ENCODE measurements at regions of chr3 and their contacts with region 1.

Region 1: GRCh38 chr3:11060500-11061251 is 68.1 kb downstream of the SLC6A1 start:
- DNase-seq: peak; percentile 51 to 60
- ATAC-seq: peak; percentile 64 to 85 (median 78)
- H3K4me3 ChIP-seq: peak overlapping the region in 8 of 10 donors; percentile 6 to 47 (median 28)
- H3K27ac ChIP-seq: no peak overlapping the region
- H3K4me1 ChIP-seq: peaks cover 0 to 15% (median 7%) of the 10 kb centered on the region in 9 donors
- H3K27me3 ChIP-seq: peaks cover 0 to 45% (median 21%) of the 10 kb centered on the region in 7 donors
- CTCF ChIP-seq: peak; percentile 70 to 93 (median 89)

Region 2: GRCh38 chr3:10758304-10759061 is 302.2 kb before region 1 on chr3:
- intact Hi-C with region 1: loop called (anchors 2 to 5 kb)
- DNase-seq: peak; percentile 22 to 42
- ATAC-seq: peak; percentile 75 to 89 (median 84)
- H3K4me3 ChIP-seq: no peak overlapping the region
- H3K27ac ChIP-seq: no peak overlapping the region
- H3K4me1 ChIP-seq: no peaks in the 10 kb centered on the region
- H3K27me3 ChIP-seq: peaks cover 0 to 76% (median 52%) of the 10 kb centered on the region in 7 donors
- CTCF ChIP-seq: peak; percentile 41 to 76 (median 72)

Region 3: GRCh38 chr3:10764259-10765051 is 296.2 kb before region 1 on chr3:
- intact Hi-C with region 1: loop called (anchors 2 to 5 kb)
- DNase-seq: no peak
- ATAC-seq: peak in 2 of 8 donors; percentile 24 to 46
- H3K4me3 ChIP-seq: no peak overlapping the region
- H3K27ac ChIP-seq: no peak overlapping the region
- H3K4me1 ChIP-seq: no peaks in the 10 kb centered on the region
- H3K27me3 ChIP-seq: peaks cover 3 to 78% (median 53%) of the 10 kb centered on the region in 7 donors
- CTCF ChIP-seq: no peak

Region 4: DNA sequence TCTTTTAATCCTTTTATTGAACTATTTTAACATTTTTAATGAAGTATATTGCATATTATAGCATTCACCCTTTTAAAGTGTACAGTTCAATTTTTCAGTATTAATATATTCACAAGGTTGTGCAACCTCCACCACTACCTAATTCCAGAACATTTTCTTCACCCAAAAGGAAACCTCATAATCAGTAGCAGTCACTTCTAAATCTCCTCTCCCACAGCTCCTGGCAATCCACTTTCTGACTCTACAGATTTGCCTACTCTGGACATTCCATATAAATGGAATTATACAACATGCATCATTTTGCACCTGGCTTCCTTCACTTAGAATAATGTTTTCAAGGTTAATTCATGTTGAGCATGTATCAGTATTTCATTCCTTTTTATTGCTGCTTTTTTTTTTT is 38.6 kb after region 1 on chr3:
- intact Hi-C with region 1: no loop called
- DNase-seq: no peak
- ATAC-seq: no peak
- H3K4me3 ChIP-seq: no peak overlapping the region
- H3K27ac ChIP-seq: no peak overlapping the region
- H3K4me1 ChIP-seq: peaks cover 0 to 22% (median 11%) of the 10 kb centered on the region in 9 donors
- H3K27me3 ChIP-seq: peaks cover 0 to 22% (median 3%) of the 10 kb centered on the region in 7 donors
- CTCF ChIP-seq: no peak

Region 5: GRCh38 chr3:11201246-11202024 is 140.8 kb after region 1 on chr3:
- intact Hi-C with region 1: loop called in 8 of 10 experiments (anchors 1 to 10 kb)
- DNase-seq: peak in 1 of 2 donors; percentile 14
- ATAC-seq: peak; percentile 50 to 75 (median 69)
- H3K4me3 ChIP-seq: no peak overlapping the region
- H3K27ac ChIP-seq: peak overlapping the region in 5 of 10 donors; percentile 2 to 74 (median 56)
- H3K4me1 ChIP-seq: peaks cover 0 to 41% (median 12%) of the 10 kb centered on the region in 9 donors
- H3K27me3 ChIP-seq: peaks cover 0 to 6% (median 0%) of the 10 kb centered on the region in 7 donors
- CTCF ChIP-seq: no peak

Region 6: GRCh38 chr3:11323813-11324212 is 263.1 kb after region 1 on chr3:
- intact Hi-C with region 1: loop called in 1 of 10 experiments (anchors 10 kb)
- DNase-seq: no peak
- ATAC-seq: no peak
- H3K4me3 ChIP-seq: no peak overlapping the region
- H3K27ac ChIP-seq: peak overlapping the region in 1 of 10 donors; percentile 22
- H3K4me1 ChIP-seq: no peaks in the 10 kb centered on the region
- H3K27me3 ChIP-seq: no peaks in the 10 kb centered on the region
- CTCF ChIP-seq: no peak

Region 7: GRCh38 chr3:11610044-11610671 is 549.5 kb after region 1 on chr3:
- intact Hi-C with region 1: no loop called
- DNase-seq: peak in 1 of 2 donors; percentile 37
- ATAC-seq: peak in 7 of 8 donors; percentile 36 to 60 (median 57)
- H3K4me3 ChIP-seq: peak overlapping the region in 3 of 10 donors; percentile 5 to 12 (median 6)
- H3K27ac ChIP-seq: peak overlapping the region in 6 of 10 donors; percentile 0 to 70 (median 31)
- H3K4me1 ChIP-seq: peaks cover 18 to 96% (median 90%) of the 10 kb centered on the region in 9 donors
- H3K27me3 ChIP-seq: no peaks in the 10 kb centered on the region
- CTCF ChIP-seq: no peak

Measured in heart right ventricle (tissue), 16 donors.